Ascending aorta (tissue), 2 donors: ENCODE measurements at regions of chr20 and their contacts with region 1.

Region 1: GRCh38 chr20:36064658-36065426 is 89.7 kb upstream of the EPB41L1 start:
- DNase-seq: peak; percentile 80 to 97
- H3K4me3 ChIP-seq: peak overlapping the region; percentile 56 to 71
- H3K27ac ChIP-seq: peak overlapping the region; percentile 85 to 88
- H3K4me1 ChIP-seq: peaks cover 7% of the 10 kb centered on the region in 2 donors
- H3K27me3 ChIP-seq: no peaks in the 10 kb centered on the region
- CTCF ChIP-seq: no peak

Region 2: GRCh38 chr20:35954200-35954906 is 110.5 kb before region 1 on chr20 and contains the start of gene SCAND1:
- intact Hi-C with region 1: loop called (anchors 5 kb)
- DNase-seq: peak; percentile 72 to 96
- H3K4me3 ChIP-seq: peak within 1 kb of the TSS; percentile 94
- H3K27ac ChIP-seq: peak within 1 kb of the TSS; percentile 98 to 99
- H3K4me1 ChIP-seq: peaks cover 0 to 16% of the 10 kb centered on the region in 2 donors
- H3K27me3 ChIP-seq: no peaks in the 10 kb centered on the region
- CTCF ChIP-seq: peak; percentile 96 to 98 (median 97)
- total RNA-seq, gene SCAND1: 146 TPM

Region 3: DNA sequence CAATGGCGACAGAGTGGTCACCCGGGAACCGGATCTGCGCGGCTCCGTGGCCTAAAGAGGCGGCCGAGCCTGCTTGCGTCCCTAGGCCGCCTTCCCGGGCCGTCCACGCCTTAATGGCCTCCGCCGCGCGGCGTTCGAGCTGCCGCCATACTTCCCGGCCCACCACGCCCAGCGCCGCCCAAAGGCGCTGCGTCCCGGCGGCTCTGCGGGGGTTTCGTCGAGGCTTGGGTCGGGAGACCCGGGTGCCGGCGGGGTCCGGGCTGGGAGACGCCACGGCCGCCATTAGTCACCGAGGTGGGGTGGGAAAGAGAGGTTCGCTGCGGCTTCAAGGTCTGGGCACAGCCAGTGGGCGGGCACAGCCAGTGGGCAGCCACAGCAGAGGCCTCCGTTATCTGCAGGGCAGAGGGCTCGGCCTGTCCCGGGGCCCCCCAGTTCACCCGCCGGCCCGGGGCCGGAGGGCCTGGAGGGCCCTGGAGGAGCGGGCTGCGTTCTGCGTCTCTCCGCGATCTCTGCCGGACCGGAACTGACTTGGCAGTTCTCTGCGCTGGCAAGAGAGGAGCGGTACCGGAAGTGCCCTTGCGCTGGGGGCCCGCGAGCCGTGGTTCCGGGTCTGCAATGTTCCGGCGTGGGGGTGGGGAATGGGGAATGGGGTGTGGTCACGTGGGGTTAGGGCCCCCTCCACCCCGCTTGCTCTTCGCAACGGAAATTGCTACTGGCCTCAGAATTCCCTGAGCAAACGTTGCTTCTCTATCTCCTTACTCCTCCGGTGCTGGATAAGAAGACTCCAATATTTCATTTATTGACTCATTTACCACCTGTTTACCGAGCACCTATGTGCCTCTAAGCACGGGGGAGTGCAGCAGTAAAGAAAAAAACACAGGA is 14.2 kb before region 1 on chr20:
- intact Hi-C with region 1: loop called (anchors 1 kb)
- DNase-seq: peak; percentile 62 to 93
- H3K4me3 ChIP-seq: peak overlapping the region; percentile 73 to 99
- H3K27ac ChIP-seq: peak overlapping the region; percentile 96 to 99
- H3K4me1 ChIP-seq: peaks cover 0 to 11% of the 10 kb centered on the region in 2 donors
- H3K27me3 ChIP-seq: no peaks in the 10 kb centered on the region
- CTCF ChIP-seq: no peak

Region 4: DNA sequence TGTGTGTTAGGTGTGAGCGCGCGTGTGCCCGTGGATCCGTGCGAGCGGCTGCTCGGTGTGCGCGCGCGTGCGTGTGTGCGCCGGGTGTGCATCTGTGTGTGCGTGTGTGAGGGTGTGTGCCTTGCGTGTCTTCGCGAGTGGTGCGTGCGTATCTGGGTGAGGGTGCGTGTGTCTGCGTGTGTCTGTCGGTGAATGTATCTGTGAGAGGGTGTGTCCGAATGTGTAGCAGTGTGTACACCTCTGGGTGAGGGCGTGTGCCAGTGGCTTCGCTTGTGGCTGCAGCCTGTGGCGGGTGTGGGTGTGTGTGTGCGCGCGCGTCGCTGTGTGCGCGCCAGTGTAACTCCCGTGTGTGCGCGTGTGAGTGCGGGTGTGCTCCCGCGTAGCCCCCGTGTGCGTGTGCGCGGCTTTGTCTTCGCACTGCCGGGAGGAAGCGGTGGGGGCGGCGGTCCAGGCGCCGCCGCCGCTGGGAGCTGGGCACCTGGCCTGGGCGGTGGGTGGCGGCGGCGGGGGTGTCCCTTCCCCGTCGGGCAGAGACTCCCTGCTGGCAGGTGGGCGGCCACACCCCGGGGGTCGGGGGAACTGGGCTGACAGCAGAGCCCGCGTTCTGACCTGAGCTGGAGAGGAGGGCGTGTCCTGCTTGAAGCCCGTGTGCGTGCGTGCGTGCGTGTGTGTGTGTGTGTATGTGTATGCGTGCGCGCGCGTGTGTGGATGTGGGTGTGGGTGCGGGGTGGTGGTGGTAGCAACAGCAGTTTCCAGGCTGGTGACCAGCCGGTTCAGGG is 28.4 kb after region 1 on chr20:
- intact Hi-C with region 1: loop called (anchors 2 kb)
- DNase-seq: peak in 1 of 2 donors; percentile 79
- H3K4me3 ChIP-seq: peak overlapping the region; percentile 76 to 82
- H3K27ac ChIP-seq: peak overlapping the region; percentile 53 to 75
- H3K4me1 ChIP-seq: peaks cover 5 to 23% of the 10 kb centered on the region in 2 donors
- H3K27me3 ChIP-seq: no peaks in the 10 kb centered on the region
- CTCF ChIP-seq: no peak

Region 5: GRCh38 chr20:36154700-36155628 is 90.1 kb after region 1 on chr20 and contains the start of gene EPB41L1:
- intact Hi-C with region 1: loop called (anchors 5 kb)
- DNase-seq: peak in 1 of 2 donors; percentile 74
- H3K4me3 ChIP-seq: peak within 1 kb of the TSS; percentile 65 to 91
- H3K27ac ChIP-seq: peak within 1 kb of the TSS; percentile 77 to 94
- H3K4me1 ChIP-seq: peaks cover 0 to 21% of the 10 kb centered on the region in 2 donors
- H3K27me3 ChIP-seq: no peaks in the 10 kb centered on the region
- CTCF ChIP-seq: no peak
- total RNA-seq, gene EPB41L1: 16.7 TPM